B cell (primary cell): ENCODE measurements at regions of chr9 and their contacts with region 1.

Region 1: DNA sequence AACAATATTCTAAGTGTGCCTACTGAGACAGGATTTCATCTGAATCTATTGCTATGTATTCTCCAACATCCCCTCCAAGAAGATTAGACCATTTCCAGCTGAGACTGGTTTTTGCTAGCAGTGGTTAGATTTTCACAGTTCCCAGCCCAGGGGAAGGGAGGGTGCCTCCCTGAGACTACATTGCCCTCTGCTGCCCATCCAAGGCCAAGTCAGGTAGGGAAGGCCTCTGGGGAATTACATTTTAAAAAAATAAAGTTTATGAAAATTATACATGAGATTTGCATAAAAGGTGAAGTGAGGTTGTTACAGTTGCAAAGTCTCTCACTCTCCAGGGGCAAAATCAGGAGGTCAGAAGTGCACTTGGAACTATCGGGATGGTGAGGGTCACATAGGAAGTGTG is 28.0 kb upstream of the SYK start:
- DNase-seq: peak; percentile 58
- ATAC-seq: peak; percentile 28
- H3K4me3 ChIP-seq: peak overlapping the region in 1 of 5 experiments; percentile 21
- H3K4me3 Mint-ChIP-seq: peak overlapping the region; percentile 38
- H3K27ac ChIP-seq: peak overlapping the region; percentile 37 to 57
- H3K27ac Mint-ChIP-seq: peak overlapping the region; percentile 86
- H3K4me1 ChIP-seq: peaks cover 60 to 67% of the 10 kb centered on the region in 2 donors
- H3K4me1 Mint-ChIP-seq: peaks cover 67% of the 10 kb centered on the region
- H3K27me3 ChIP-seq: no peaks in the 10 kb centered on the region
- H3K27me3 Mint-ChIP-seq: no peaks in the 10 kb centered on the region
- CTCF ChIP-seq: peak; percentile 26

Region 2: GRCh38 chr9:90787771-90788460 is 14.3 kb after region 1 on chr9:
- CTCF ChIA-PET with region 1: interaction called, 17 read pairs
- POLR2A ChIA-PET with region 1: no interaction called
- intact Hi-C with region 1: no loop called
- DNase-seq: no peak
- ATAC-seq: no peak
- H3K4me3 ChIP-seq: no peak overlapping the region
- H3K4me3 Mint-ChIP-seq: no peak overlapping the region
- H3K27ac ChIP-seq: no peak overlapping the region
- H3K27ac Mint-ChIP-seq: no peak overlapping the region
- H3K4me1 ChIP-seq: peaks cover 17 to 24% of the 10 kb centered on the region in 2 donors
- H3K4me1 Mint-ChIP-seq: peaks cover 37% of the 10 kb centered on the region
- H3K27me3 ChIP-seq: no peaks in the 10 kb centered on the region
- H3K27me3 Mint-ChIP-seq: no peaks in the 10 kb centered on the region
- CTCF ChIP-seq: no peak

Region 3: GRCh38 chr9:90801583-90802289 is 28.1 kb after region 1 on chr9 and contains the start of gene SYK:
- CTCF ChIA-PET with region 1: interaction called, 13 read pairs
- POLR2A ChIA-PET with region 1: interaction called, 9 read pairs
- intact Hi-C with region 1: loop called (anchors 1 kb)
- DNase-seq: peak; percentile 87
- ATAC-seq: peak; percentile 83
- H3K4me3 ChIP-seq: peak within 1 kb of the TSS; percentile 87 to 98 (median 93)
- H3K4me3 Mint-ChIP-seq: peak within 1 kb of the TSS; percentile 97
- H3K27ac ChIP-seq: peak within 1 kb of the TSS; percentile 87 to 93
- H3K27ac Mint-ChIP-seq: peak within 1 kb of the TSS; percentile 92
- H3K4me1 ChIP-seq: peaks cover 47 to 51% of the 10 kb centered on the region in 2 donors
- H3K4me1 Mint-ChIP-seq: peaks cover 68% of the 10 kb centered on the region
- H3K27me3 ChIP-seq: no peaks in the 10 kb centered on the region
- H3K27me3 Mint-ChIP-seq: no peaks in the 10 kb centered on the region
- CTCF ChIP-seq: no peak
- total RNA-seq, gene SYK: 242 and 251 TPM in 2 replicates

Region 4: DNA sequence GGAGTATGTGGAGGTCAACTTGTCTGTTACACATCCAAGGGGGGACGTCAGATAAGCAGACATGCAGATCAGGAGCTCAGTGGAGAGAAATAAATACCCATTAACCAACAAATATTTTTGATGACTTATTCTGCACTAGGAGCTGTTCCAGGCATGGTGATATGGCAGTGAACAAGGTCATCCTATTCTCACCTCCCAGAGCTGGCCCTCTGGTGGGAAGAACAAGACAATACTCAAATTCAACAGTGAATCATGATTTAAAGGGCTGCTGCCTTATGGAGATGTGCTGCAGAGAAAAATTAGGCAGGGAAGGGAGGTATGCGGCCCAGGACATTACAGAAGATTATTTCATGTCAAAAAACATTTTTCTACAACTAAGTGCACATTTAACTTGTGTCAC is 64.5 kb after region 1 on chr9:
- CTCF ChIA-PET with region 1: interaction called, 34 read pairs
- POLR2A ChIA-PET with region 1: interaction called, 5 read pairs
- intact Hi-C with region 1: loop called (anchors 2 kb)
- DNase-seq: no peak
- ATAC-seq: no peak
- H3K4me3 ChIP-seq: no peak overlapping the region
- H3K4me3 Mint-ChIP-seq: peak overlapping the region; percentile 47
- H3K27ac ChIP-seq: peak overlapping the region in 1 of 2 donors; percentile 41
- H3K27ac Mint-ChIP-seq: peak overlapping the region; percentile 87
- H3K4me1 ChIP-seq: peaks cover 92 to 96% of the 10 kb centered on the region in 2 donors
- H3K4me1 Mint-ChIP-seq: peaks cover 68% of the 10 kb centered on the region
- H3K27me3 ChIP-seq: no peaks in the 10 kb centered on the region
- H3K27me3 Mint-ChIP-seq: no peaks in the 10 kb centered on the region
- CTCF ChIP-seq: peak; percentile 29

Region 5: GRCh38 chr9:90870621-90871326 is 97.2 kb after region 1 on chr9:
- CTCF ChIA-PET with region 1: interaction called, 26 read pairs
- POLR2A ChIA-PET with region 1: no interaction called
- intact Hi-C with region 1: loop called (anchors 1 kb)
- DNase-seq: peak; percentile 70
- ATAC-seq: peak; percentile 39
- H3K4me3 ChIP-seq: no peak overlapping the region
- H3K4me3 Mint-ChIP-seq: no peak overlapping the region
- H3K27ac ChIP-seq: peak overlapping the region in 1 of 2 donors; percentile 44
- H3K27ac Mint-ChIP-seq: no peak overlapping the region
- H3K4me1 ChIP-seq: no peaks in the 10 kb centered on the region
- H3K4me1 Mint-ChIP-seq: peaks cover 1% of the 10 kb centered on the region
- H3K27me3 ChIP-seq: no peaks in the 10 kb centered on the region
- H3K27me3 Mint-ChIP-seq: no peaks in the 10 kb centered on the region
- CTCF ChIP-seq: peak; percentile 99

Region 6: DNA sequence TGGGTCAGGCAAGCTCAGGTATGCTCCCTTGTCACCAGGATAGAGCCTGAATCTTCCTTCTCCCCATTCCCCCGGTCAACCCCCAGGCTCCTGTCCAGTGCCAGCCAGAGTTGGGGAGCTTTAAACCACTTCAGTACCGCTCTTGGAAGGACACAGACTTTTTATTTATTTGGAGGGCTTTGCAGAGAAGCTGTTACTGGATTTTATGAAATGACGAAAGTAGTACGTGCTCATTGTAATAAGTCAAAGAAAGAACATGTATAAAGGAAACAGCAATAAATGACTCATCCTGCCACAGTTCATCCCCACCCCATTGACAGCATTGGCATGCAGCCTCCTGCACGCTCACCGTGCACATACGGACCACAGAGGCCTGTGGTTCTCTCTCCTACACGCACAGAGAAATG is 357.8 kb after region 1 on chr9:
- CTCF ChIA-PET with region 1: no interaction called
- POLR2A ChIA-PET with region 1: no interaction called
- intact Hi-C with region 1: no loop called
- DNase-seq: no peak
- ATAC-seq: no peak
- H3K4me3 ChIP-seq: no peak overlapping the region
- H3K4me3 Mint-ChIP-seq: no peak overlapping the region
- H3K27ac ChIP-seq: no peak overlapping the region
- H3K27ac Mint-ChIP-seq: no peak overlapping the region
- H3K4me1 ChIP-seq: no peaks in the 10 kb centered on the region
- H3K4me1 Mint-ChIP-seq: no peaks in the 10 kb centered on the region
- H3K27me3 ChIP-seq: no peaks in the 10 kb centered on the region
- H3K27me3 Mint-ChIP-seq: no peaks in the 10 kb centered on the region
- CTCF ChIP-seq: no peak